ENCODE measurements at regions of chr1 and their contacts with region 1.

Region 1: DNA sequence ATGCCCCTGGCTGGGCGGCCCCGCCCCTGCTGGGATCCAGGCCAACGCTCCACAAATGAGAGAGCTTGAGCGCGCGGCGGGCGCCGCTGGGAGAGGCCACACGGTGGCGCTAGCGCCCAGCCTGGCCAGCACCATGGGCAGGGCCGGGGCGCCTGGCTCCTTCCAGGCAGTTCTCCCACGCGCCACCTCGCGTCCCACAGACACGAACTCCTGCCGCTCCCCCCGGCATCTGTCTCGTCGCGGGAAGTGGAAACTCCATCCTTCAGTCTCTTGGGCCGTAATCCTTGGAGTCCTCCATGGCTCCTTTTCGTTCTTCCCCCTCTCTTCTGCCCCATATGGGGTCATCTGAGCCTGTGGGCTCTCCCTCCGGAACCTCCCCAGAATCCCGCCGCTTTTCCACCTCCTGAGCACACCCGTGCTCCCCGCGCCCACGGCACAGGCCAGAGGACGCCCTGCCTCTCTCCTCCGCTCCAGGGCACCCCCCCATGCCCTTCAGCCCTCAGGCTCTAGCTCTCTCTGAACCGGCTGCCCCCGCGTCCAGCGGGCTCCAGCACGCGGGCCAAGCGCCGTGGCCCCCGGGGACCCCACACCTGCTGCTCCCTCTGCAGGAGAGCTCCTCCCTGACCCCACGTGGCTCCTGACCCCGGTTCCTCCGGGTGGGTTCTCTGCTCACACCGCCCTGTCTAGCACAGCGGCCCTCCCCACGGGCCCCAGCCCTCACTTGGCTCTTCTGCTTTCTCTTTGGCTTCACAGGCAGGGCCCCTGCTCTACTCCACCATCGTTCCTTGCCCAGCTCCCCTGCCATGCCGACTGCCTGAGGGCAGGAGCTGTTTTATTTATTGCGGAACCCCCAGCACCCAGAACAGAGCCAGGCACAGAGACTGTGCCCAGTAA is 31.9 kb upstream of the EDN2 start:
- DNase-seq: peak; percentile 68 to 76
- ATAC-seq: peak; percentile 90 to 98
- H3K4me3 ChIP-seq: peak overlapping the region; percentile 40; the same call in 2 of the 3 replicates
- H3K27ac ChIP-seq: peak overlapping the region; percentile 79 to 85
- H3K4me1 ChIP-seq: peaks cover 12% of the 10 kb centered on the region
- CTCF ChIP-seq: peak; percentile 75
- EP300 ChIP-seq: no peak
- POLR2A ChIP-seq: no peak
- RAD21 ChIP-seq: peak; percentile 46 to 65; a peak in 4 of 5 replicates

Region 2: GRCh38 chr1:41313661-41314131 is 202.7 kb before region 1 on chr1:
- CTCF ChIA-PET with region 1: no interaction called
- POLR2A ChIA-PET with region 1: no interaction called
- DNase-seq: peak in 1 of 2 experiments; percentile 20
- ATAC-seq: peak in 1 of 2 experiments; percentile 75; a peak in 3 of 6 replicates
- H3K4me3 ChIP-seq: no peak overlapping the region
- H3K27ac ChIP-seq: no peak overlapping the region
- H3K4me1 ChIP-seq: 0 out of 3 replicates have a peak, but pooled peaks cover 5% of the 10 kb centered on the region
- CTCF ChIP-seq: peak; percentile 32
- EP300 ChIP-seq: no peak
- POLR2A ChIP-seq: no peak
- RAD21 ChIP-seq: 0 out of 5 replicates have a peak, but pooled peaks of 1 of the 2 experiments have one; percentile 24

Region 3: DNA sequence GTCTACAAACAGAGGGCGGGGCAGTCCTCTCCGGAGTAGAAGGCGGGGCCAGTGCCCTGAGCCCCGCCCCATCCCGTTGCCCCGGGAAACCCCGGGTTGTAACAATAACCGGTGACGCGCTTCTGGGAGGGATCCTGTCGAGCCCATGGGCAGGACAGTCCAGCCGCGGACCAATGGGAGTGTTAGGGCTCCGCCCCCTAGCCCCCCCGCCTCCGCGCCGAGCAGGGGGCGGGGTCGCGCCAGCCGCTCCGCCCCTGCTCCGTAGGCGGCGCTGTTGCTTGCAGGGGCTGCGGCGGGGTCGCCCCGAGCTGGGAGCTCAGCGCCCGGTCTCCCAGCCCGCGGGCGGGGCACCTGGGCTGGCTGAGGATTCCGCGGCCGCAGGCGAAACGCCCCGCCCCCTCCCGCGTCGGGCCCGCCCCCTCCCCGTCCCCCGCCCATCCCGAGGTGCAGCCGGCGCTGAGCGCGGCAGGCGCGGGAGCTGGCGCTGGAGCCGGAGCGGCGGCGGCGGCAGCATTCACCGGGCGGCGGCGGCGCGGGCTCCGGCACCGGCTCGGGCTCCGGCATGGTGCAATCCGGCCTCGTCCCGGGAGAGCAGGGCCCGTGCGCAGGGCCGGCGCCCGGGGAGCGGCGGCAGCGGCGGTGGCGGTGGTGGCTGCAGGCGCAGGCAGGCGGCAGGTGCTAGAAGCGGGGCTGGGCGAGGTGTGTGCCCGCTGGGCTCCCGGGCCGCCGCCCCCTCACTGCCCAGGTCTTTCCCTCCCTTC is 155.2 kb before region 1 on chr1 and contains the start of gene FOXO6:
- CTCF ChIA-PET with region 1: no interaction called
- POLR2A ChIA-PET with region 1: no interaction called
- DNase-seq: peak; percentile 92 to 96
- ATAC-seq: peak; percentile 76 to 91
- H3K4me3 ChIP-seq: peak within 1 kb of the TSS; percentile 55
- H3K27ac ChIP-seq: peak within 1 kb of the TSS; percentile 45 to 81; a peak in 5 of 6 replicates
- H3K4me1 ChIP-seq: peaks cover 18% of the 10 kb centered on the region; the same call in 2 of the 3 replicates
- CTCF ChIP-seq: peak; percentile 35; the same call in 2 of the 3 replicates
- EP300 ChIP-seq: no peak
- POLR2A ChIP-seq: no peak
- RAD21 ChIP-seq: peak in 1 of 2 experiments; percentile 27; a peak in 1 of 5 replicates
- polyA plus RNA-seq, gene FOXO6: 0.05 and 0.10 TPM in 2 replicates

Region 4: GRCh38 chr1:41474490-41475271 is 41.7 kb before region 1 on chr1:
- CTCF ChIA-PET with region 1: interaction called, 10 read pairs
- POLR2A ChIA-PET with region 1: no interaction called
- DNase-seq: no peak
- ATAC-seq: 0 out of 6 replicates have a peak, but pooled peaks of 1 of the 2 experiments have one; percentile 23
- H3K4me3 ChIP-seq: no peak overlapping the region
- H3K27ac ChIP-seq: no peak overlapping the region
- H3K4me1 ChIP-seq: 0 out of 3 replicates have a peak, but pooled peaks cover 4% of the 10 kb centered on the region
- CTCF ChIP-seq: no peak
- EP300 ChIP-seq: no peak
- POLR2A ChIP-seq: no peak
- RAD21 ChIP-seq: no peak

Region 5: GRCh38 chr1:41496080-41497055 is 20.0 kb before region 1 on chr1:
- CTCF ChIA-PET with region 1: interaction called, 32 read pairs
- POLR2A ChIA-PET with region 1: no interaction called
- DNase-seq: peak in 1 of 2 experiments; percentile 82
- ATAC-seq: peak; percentile 57 to 70
- H3K4me3 ChIP-seq: peak overlapping the region; percentile 33
- H3K27ac ChIP-seq: peak overlapping the region; percentile 82 to 100
- H3K4me1 ChIP-seq: peaks cover 90% of the 10 kb centered on the region
- CTCF ChIP-seq: no peak
- EP300 ChIP-seq: no peak; a peak in 1 of 5 replicates
- POLR2A ChIP-seq: no peak
- RAD21 ChIP-seq: no peak

Region 6: GRCh38 chr1:41540886-41541591 is 24.6 kb after region 1 on chr1:
- CTCF ChIA-PET with region 1: interaction called, 13 read pairs
- POLR2A ChIA-PET with region 1: no interaction called
- DNase-seq: no peak
- ATAC-seq: no peak
- H3K4me3 ChIP-seq: no peak overlapping the region
- H3K27ac ChIP-seq: no peak overlapping the region
- H3K4me1 ChIP-seq: no peaks in the 10 kb centered on the region
- CTCF ChIP-seq: no peak
- EP300 ChIP-seq: no peak
- POLR2A ChIP-seq: no peak
- RAD21 ChIP-seq: no peak

Measured in A549 (cell line).